ENCODE measurements at regions of chr7 and their contacts with region 1.

Region 1: GRCh38 chr7:107462740-107463444 is 7.0 kb upstream of the GPR22 start:
- DNase-seq: peak; percentile 60
- H3K4me3 ChIP-seq: no peak overlapping the region
- H3K27ac ChIP-seq: no peak overlapping the region
- H3K4me1 ChIP-seq: no peaks in the 10 kb centered on the region
- H3K27me3 ChIP-seq: no peaks in the 10 kb centered on the region
- CTCF ChIP-seq: peak; percentile 88 to 91

Region 2: DNA sequence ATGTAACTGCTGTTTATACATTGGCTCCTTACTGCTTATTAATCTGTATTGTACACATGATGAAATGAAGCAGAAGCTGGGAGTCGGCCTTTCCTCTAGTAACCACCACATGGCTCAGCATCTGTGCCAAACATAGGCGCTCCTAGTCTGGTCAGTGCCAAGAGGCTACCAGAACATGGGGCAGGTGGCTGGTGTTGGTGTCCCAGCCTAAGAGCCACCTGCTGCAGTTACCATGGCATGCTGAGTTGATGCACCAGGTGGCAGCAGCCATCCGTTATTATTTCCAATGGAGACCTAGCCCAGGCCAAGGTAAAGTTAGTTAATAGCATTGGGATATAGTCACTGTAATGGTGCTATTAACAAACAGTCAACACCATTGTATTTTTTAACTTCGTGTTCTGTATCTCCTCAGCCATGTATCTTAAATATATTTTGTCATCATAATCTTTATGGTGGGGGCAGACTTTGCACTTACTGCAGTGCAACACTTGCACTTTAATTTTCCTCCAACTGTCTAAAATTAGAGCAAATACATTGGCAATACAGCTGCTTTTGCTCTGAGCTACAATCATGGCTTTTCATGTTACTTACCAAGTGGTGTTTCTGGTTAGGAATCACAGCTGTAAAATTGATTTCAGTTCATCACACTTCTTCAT is 261.0 kb before region 1 on chr7:
- CTCF ChIA-PET with region 1: no interaction called
- dilution Hi-C with region 1: no loop called
- in situ Hi-C with region 1: no loop called
- intact Hi-C with region 1: loop called (anchors 2 kb)
- DNase-seq: peak; percentile 37
- H3K4me3 ChIP-seq: no peak overlapping the region
- H3K27ac ChIP-seq: no peak overlapping the region
- H3K4me1 ChIP-seq: no peaks in the 10 kb centered on the region
- H3K27me3 ChIP-seq: no peaks in the 10 kb centered on the region
- CTCF ChIP-seq: peak; percentile 69 to 71

Region 3: GRCh38 chr7:107563775-107564552 is 101.1 kb after region 1 on chr7 and contains the starts of genes COG5 and DUS4L:
- CTCF ChIA-PET with region 1: no interaction called
- dilution Hi-C with region 1: no loop called
- in situ Hi-C with region 1: no loop called
- intact Hi-C with region 1: loop called (anchors 1 kb)
- DNase-seq: peak; percentile 83
- H3K4me3 ChIP-seq: peak within 1 kb of the TSS; percentile 65 to 98 (median 84)
- H3K27ac ChIP-seq: peak within 1 kb of the TSS; percentile 98
- H3K4me1 ChIP-seq: peaks cover 41% of the 10 kb centered on the region
- H3K27me3 ChIP-seq: no peaks in the 10 kb centered on the region
- CTCF ChIP-seq: no peak
- total RNA-seq, gene COG5: 60.5 to 66.2 TPM
- total RNA-seq, gene DUS4L: 13.0 to 19.0 TPM

Region 4: DNA sequence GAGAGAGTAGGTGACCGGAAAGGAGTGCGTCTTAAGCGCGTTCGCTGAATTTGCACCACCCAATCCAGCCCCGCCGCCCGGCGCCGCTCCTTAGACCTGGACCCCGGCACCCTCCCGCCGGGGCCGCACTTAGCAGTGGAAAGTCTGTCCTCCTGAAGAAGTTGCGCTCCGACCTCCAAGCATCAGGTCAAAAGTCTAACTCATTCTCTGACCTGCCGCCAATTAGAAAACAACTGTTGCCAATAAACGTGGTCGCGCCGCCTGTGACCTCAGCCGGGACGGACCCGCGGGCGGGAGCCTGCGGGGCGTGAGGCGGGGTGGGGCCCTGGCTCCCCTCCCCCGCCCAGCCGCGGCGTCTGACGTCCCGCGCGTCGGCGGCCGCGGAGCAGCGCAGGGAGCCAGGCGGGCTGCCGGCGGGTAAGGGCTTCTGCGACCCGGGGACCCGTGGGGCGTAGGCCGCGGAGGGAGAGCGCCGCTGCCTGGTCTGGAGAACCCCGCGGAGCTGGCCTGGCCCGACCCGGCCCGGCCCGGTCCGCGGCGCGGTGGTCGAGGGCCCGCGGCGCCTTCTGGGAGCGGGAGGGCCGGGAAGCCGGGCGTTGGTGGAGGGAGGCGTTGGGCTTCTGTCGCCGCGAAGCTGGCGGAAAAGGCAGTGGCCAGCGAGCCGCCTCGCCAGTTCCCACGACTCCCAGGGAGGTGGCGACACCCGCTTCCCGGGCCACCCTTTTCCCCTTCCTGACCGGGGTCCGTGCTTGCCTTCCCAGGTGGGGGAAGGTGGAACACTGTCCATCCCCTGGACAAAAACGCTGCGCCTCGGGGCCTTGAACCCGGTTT is 117.2 kb after region 1 on chr7 and contains the start of gene BCAP29:
- CTCF ChIA-PET with region 1: no interaction called
- dilution Hi-C with region 1: no loop called
- in situ Hi-C with region 1: no loop called
- intact Hi-C with region 1: loop called (anchors 5 kb)
- DNase-seq: peak; percentile 65
- H3K4me3 ChIP-seq: peak within 1 kb of the TSS; percentile 68 to 88 (median 82)
- H3K27ac ChIP-seq: peak within 1 kb of the TSS; percentile 75
- H3K4me1 ChIP-seq: peaks cover 9% of the 10 kb centered on the region
- H3K27me3 ChIP-seq: no peaks in the 10 kb centered on the region
- CTCF ChIP-seq: peak in 1 of 2 donors; percentile 38
- total RNA-seq, gene BCAP29: 92.1 to 129 TPM

Region 5: DNA sequence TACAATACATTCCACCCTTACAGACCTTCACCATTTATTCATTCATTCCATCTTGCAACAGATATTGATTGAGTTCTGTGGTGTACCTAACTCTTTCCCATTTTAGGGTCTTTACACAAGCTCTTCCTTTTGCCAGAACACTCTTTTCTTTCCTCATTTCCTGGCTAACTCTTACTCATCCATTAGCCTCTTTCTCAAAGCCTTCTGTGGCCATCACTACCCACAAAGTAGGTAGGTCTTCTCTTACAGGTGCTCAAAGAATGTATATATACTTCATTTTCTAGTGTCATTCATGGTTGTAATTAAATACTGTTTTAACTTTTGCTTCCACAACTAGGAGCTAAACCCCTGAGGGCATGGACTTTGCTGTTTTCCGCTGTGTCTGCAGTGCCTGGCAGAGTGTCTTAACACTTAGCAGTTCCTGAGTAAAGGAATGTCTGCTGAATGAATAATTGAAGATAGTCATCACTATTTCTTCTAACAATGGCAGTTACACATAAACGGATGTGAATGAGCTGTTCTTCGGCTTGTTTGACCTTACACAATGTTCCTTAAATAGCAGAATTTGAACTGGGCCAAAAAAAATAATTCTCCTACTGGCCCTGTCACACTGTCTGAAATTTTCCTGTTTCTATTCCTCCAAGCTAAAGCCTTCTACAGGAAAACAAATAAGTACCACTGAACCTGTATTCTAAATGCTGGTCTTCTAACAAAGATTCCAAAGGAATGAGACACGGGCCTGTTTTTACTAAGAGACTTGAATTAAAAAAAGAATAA is 132.3 kb after region 1 on chr7:
- CTCF ChIA-PET with region 1: no interaction called
- dilution Hi-C with region 1: no loop called
- in situ Hi-C with region 1: no loop called
- intact Hi-C with region 1: loop called (anchors 1 kb)
- DNase-seq: peak; percentile 97
- H3K4me3 ChIP-seq: no peak overlapping the region
- H3K27ac ChIP-seq: peak overlapping the region; percentile 82
- H3K4me1 ChIP-seq: peaks cover 42% of the 10 kb centered on the region
- H3K27me3 ChIP-seq: no peaks in the 10 kb centered on the region
- CTCF ChIP-seq: no peak

Region 6: GRCh38 chr7:107711301-107711700 is 248.4 kb after region 1 on chr7:
- CTCF ChIA-PET with region 1: no interaction called
- dilution Hi-C with region 1: loop called (anchors 10 kb)
- in situ Hi-C with region 1: no loop called
- intact Hi-C with region 1: no loop called
- DNase-seq: peak; percentile 31
- H3K4me3 ChIP-seq: no peak overlapping the region
- H3K27ac ChIP-seq: no peak overlapping the region
- H3K4me1 ChIP-seq: peaks cover 18% of the 10 kb centered on the region
- H3K27me3 ChIP-seq: no peaks in the 10 kb centered on the region
- CTCF ChIP-seq: no peak

Region 7: DNA sequence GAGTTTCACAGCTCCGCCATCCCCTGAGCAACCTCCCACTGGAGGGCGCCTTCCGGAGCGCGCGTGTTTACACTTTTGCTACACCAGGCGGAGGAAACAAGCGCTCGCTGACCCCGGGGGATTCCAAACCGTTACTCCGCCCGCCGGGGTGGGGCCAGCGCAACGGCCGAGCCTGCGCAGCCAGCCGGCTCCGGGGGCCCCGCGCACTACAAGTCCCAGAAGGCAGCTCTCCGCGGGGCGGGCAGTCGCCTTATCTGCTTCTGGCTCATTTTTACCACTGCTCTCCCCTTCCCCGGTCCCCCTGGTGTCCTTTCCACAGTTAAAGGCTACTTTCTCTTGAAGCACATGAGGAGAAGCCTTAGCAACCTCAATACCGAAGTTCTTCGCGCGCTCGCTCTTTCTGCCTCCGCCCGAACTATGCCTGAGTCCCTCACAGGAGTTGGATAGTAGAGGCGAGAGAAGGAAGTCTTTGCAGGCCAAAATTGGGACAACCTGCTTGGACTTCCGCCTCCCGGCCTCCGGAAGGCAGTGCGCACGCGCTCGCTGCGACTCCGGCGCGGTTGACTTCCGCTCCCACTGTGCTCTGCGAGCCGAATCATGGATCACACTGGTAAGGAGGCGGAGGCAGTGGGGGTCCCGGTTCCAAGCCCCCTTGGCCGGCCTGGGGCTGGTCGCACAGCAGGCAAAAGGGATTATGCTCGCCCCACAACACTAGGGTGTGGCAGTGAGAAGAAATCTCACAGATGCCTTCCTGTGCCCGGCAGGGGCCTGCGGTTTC is 280.9 kb after region 1 on chr7 and contains the start of gene CBLL1:
- CTCF ChIA-PET with region 1: no interaction called
- dilution Hi-C with region 1: no loop called
- in situ Hi-C with region 1: no loop called
- intact Hi-C with region 1: loop called (anchors 5 kb)
- DNase-seq: peak; percentile 94
- H3K4me3 ChIP-seq: peak within 1 kb of the TSS; percentile 75 to 99 (median 93)
- H3K27ac ChIP-seq: peak within 1 kb of the TSS; percentile 75
- H3K4me1 ChIP-seq: peaks cover 20% of the 10 kb centered on the region
- H3K27me3 ChIP-seq: no peaks in the 10 kb centered on the region
- CTCF ChIP-seq: peak; percentile 37 to 76
- total RNA-seq, gene CBLL1: 26.9 to 37.8 TPM